CD4-positive, alpha-beta memory T cell (primary cell): ENCODE measurements at regions of chr19 and their contacts with region 1.

Region 1: DNA sequence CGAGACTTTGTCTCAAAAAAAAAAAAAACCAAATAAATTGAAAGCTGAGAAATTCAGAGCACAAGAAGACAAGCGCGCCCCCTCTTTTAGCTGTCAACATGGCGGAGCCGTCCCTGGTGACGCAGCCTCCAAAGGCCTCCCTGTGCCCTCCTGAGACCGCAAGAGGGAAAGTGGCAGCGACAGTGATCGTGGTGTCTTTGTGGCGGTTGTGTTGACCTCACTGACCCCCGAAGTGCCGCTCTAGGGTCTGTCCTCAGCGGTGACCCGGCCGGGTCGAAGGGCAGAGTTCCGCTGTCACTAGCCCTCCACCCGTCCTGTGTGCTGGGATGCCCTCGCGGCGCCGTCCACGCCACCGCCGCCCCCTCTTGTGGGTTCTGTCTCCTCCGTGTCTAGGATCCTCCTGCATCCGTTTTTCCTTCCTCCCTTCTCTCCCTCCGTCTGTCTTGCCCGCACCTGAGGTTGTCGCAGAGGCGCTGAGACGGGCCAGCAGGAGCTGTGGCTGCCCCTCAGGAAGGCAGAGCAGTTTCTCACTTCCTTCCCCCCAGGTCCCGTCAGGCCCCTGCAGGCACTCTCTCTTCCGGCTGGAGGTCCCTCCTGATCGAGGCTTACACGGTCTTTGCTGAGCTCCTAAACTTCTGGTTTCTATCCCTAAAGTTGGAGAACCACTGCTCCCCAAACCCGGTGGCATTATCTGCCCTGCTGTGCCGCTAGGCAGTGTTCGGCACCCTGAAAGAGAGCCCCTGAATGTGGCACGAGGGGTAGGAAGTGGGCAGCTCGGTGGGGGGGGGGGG is 7.2 kb downstream of the UHRF1 start:
- DNase-seq: peak; percentile 33 to 67 (median 44)
- H3K4me3 ChIP-seq: peak overlapping the region; percentile 55 to 61
- H3K4me3 Mint-ChIP-seq: peak overlapping the region; percentile 94 to 100 (median 100)
- H3K27ac ChIP-seq: peak overlapping the region; percentile 62
- H3K27ac Mint-ChIP-seq: peak overlapping the region; percentile 98 to 100 (median 99)
- H3K4me1 ChIP-seq: peaks cover 58% of the 10 kb centered on the region
- H3K4me1 Mint-ChIP-seq: peaks cover 28 to 57% (median 40%) of the 10 kb centered on the region in 4 donors
- H3K27me3 ChIP-seq: no peaks in the 10 kb centered on the region
- H3K27me3 Mint-ChIP-seq: no peaks in the 10 kb centered on the region

Region 2: GRCh38 chr19:4867534-4868285 is 48.8 kb before region 1 on chr19 and contains the start of gene PLIN3:
- CTCF ChIA-PET with region 1: interaction called, 225 read pairs
- POLR2A ChIA-PET with region 1: interaction called, 41 read pairs
- intact Hi-C with region 1: loop called (anchors 1 kb)
- DNase-seq: peak; percentile 78 to 89 (median 79)
- H3K4me3 ChIP-seq: peak within 1 kb of the TSS; percentile 60 to 76
- H3K4me3 Mint-ChIP-seq: peak within 1 kb of the TSS; percentile 85 to 92 (median 86)
- H3K27ac ChIP-seq: peak within 1 kb of the TSS; percentile 74
- H3K27ac Mint-ChIP-seq: peak within 1 kb of the TSS; percentile 79 to 91 (median 87)
- H3K4me1 ChIP-seq: peaks cover 10% of the 10 kb centered on the region
- H3K4me1 Mint-ChIP-seq: peaks cover 10 to 21% (median 14%) of the 10 kb centered on the region in 4 donors
- H3K27me3 ChIP-seq: no peaks in the 10 kb centered on the region
- H3K27me3 Mint-ChIP-seq: peaks cover 2 to 3% of the 10 kb centered on the region in 2 donors
- total RNA-seq, gene PLIN3: 16.0 to 18.2 TPM

Region 3: DNA sequence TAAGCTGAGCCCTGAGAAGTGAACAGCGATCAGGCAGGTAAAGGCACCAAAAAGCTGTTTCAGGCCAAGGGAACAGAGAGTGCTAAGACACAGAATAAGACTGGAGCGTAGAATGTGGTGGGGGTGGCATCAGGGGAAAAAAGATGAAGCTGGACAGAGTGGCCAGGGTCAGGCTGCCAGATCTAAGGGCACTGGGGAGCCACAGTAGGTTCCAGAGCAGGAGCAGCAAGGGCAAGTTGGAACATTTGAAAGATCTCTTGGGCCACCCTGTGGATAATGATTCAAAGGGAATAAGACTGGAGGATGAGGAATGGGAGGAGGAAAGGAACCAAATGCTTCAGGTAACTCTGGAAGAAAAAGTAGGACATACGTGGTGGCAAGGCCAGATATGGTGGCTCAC is 42.6 kb before region 1 on chr19:
- CTCF ChIA-PET with region 1: interaction called, 225 read pairs
- POLR2A ChIA-PET with region 1: interaction called, 41 read pairs
- intact Hi-C with region 1: loop called (anchors 1 kb)
- DNase-seq: no peak
- H3K4me3 ChIP-seq: no peak overlapping the region
- H3K4me3 Mint-ChIP-seq: no peak overlapping the region
- H3K27ac ChIP-seq: no peak overlapping the region
- H3K27ac Mint-ChIP-seq: no peak overlapping the region
- H3K4me1 ChIP-seq: no peaks in the 10 kb centered on the region
- H3K4me1 Mint-ChIP-seq: peaks cover 3 to 5% (median 4%) of the 10 kb centered on the region in 4 donors
- H3K27me3 ChIP-seq: no peaks in the 10 kb centered on the region
- H3K27me3 Mint-ChIP-seq: peaks cover 2 to 4% of the 10 kb centered on the region in 2 donors